ENCODE measurements at regions of chr1 and their contacts with region 1.

Region 1: GRCh38 chr1:43293896-43294760 is 6.7 kb upstream of the TIE1 start:
- DNase-seq: no peak
- H3K4me3 ChIP-seq: no peak overlapping the region
- H3K27ac ChIP-seq: peak overlapping the region; percentile 32 to 66 (median 64)
- H3K4me1 ChIP-seq: peaks cover 0 to 28% (median 24%) of the 10 kb centered on the region in 4 donors
- H3K27me3 ChIP-seq: no peaks in the 10 kb centered on the region
- CTCF ChIP-seq: no peak
- EP300 ChIP-seq: no peak
- POLR2A ChIP-seq: no peak

Region 2: GRCh38 chr1:41902125-41902524 is 1392.0 kb before region 1 on chr1:
- intact Hi-C with region 1: loop called (anchors 10 kb)
- DNase-seq: no peak
- H3K4me3 ChIP-seq: no peak overlapping the region
- H3K27ac ChIP-seq: no peak overlapping the region
- H3K4me1 ChIP-seq: no peaks in the 10 kb centered on the region
- H3K27me3 ChIP-seq: no peaks in the 10 kb centered on the region
- CTCF ChIP-seq: no peak
- EP300 ChIP-seq: no peak
- POLR2A ChIP-seq: no peak

Region 3: GRCh38 chr1:43121256-43121900 is 172.8 kb before region 1 on chr1:
- intact Hi-C with region 1: no loop called
- DNase-seq: no peak
- H3K4me3 ChIP-seq: no peak overlapping the region
- H3K27ac ChIP-seq: no peak overlapping the region
- H3K4me1 ChIP-seq: no peaks in the 10 kb centered on the region
- H3K27me3 ChIP-seq: no peaks in the 10 kb centered on the region
- CTCF ChIP-seq: no peak
- EP300 ChIP-seq: no peak
- POLR2A ChIP-seq: no peak

Region 4: DNA sequence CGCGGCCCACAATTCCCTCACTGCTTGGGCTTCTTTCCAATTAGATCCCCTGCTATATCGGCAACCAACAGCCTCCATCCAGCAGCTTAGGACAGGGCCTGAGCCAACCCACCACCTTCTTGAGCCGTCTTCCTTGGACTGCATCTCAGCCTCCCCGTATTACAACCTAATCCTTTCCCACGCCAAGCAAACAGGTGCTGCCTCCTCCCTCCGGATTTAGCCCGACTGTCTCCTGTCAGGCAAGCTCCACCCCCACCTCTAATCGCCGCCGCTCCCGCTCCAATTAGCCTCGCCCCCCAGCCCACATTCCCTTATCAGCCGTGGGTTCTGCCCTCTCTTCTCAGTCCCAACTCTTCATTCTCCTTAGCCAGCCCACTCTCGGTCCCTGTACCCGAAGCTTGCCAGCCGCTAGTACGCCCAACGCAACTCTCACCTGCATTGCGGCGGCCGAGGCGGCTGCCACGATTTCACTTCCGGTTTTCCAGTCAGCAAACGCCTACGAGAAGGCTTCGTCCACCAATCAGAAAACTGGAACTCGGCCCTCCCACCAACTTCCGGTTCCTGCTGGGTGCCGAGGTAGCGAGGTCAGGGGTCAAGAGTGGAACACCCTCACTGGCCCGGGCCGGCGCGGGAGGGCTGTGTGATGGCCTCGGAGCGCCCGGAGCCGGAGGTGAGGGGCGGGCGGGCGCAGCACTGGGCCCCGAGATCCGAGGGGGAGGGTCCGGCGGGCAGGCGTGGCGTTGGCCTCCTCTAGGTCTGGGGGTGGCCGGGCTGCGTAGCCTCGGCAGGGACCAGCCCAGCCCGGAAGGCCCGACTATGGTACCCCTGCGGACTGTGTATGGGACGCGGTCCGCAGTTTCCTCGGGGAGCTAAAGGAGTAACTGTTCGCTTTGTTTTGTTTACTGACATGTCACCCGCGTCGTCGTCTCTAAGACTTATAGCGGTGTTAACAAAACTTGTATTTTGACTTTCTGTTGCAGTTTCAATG is 95.5 kb after region 1 on chr1 and contains the starts of genes MED8 and SZT2:
- intact Hi-C with region 1: no loop called
- DNase-seq: peak; percentile 98
- H3K4me3 ChIP-seq: peak within 1 kb of the TSS; percentile 73 to 91 (median 83)
- H3K27ac ChIP-seq: peak within 1 kb of the TSS; percentile 85 to 89 (median 86)
- H3K4me1 ChIP-seq: peaks cover 0 to 32% (median 28%) of the 10 kb centered on the region in 4 donors
- H3K27me3 ChIP-seq: no peaks in the 10 kb centered on the region
- CTCF ChIP-seq: no peak
- EP300 ChIP-seq: no peak
- POLR2A ChIP-seq: peak; percentile 50 to 83
- total RNA-seq, gene MED8: 25.3 to 33.4 (median 29.6) TPM
- total RNA-seq, gene SZT2: 19.1 to 47.4 (median 25.2) TPM

Measured in sigmoid colon (tissue), 7 donors.